PC-9 (cell line): ENCODE measurements at regions of chr1 and their contacts with region 1.

Region 1: DNA sequence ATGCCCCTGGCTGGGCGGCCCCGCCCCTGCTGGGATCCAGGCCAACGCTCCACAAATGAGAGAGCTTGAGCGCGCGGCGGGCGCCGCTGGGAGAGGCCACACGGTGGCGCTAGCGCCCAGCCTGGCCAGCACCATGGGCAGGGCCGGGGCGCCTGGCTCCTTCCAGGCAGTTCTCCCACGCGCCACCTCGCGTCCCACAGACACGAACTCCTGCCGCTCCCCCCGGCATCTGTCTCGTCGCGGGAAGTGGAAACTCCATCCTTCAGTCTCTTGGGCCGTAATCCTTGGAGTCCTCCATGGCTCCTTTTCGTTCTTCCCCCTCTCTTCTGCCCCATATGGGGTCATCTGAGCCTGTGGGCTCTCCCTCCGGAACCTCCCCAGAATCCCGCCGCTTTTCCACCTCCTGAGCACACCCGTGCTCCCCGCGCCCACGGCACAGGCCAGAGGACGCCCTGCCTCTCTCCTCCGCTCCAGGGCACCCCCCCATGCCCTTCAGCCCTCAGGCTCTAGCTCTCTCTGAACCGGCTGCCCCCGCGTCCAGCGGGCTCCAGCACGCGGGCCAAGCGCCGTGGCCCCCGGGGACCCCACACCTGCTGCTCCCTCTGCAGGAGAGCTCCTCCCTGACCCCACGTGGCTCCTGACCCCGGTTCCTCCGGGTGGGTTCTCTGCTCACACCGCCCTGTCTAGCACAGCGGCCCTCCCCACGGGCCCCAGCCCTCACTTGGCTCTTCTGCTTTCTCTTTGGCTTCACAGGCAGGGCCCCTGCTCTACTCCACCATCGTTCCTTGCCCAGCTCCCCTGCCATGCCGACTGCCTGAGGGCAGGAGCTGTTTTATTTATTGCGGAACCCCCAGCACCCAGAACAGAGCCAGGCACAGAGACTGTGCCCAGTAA is 31.9 kb upstream of the EDN2 start:
- DNase-seq: peak; percentile 62 to 96
- H3K4me3 ChIP-seq: peak overlapping the region; percentile 49; the same call in 1 of the 2 replicates
- H3K27ac ChIP-seq: peak overlapping the region; percentile 96
- H3K4me1 ChIP-seq: peaks cover 42% of the 10 kb centered on the region
- H3K27me3 ChIP-seq: no peaks in the 10 kb centered on the region
- CTCF ChIP-seq: peak; percentile 87

Region 2: GRCh38 chr1:41353726-41354125 is 162.7 kb before region 1 on chr1:
- CTCF ChIA-PET with region 1: no interaction called
- POLR2A ChIA-PET with region 1: no interaction called
- intact Hi-C with region 1: loop called (anchors 10 kb)
- DNase-seq: peak; percentile 98
- H3K4me3 ChIP-seq: no peak overlapping the region
- H3K27ac ChIP-seq: peak overlapping the region; percentile 47
- H3K4me1 ChIP-seq: peaks cover 59% of the 10 kb centered on the region
- H3K27me3 ChIP-seq: no peaks in the 10 kb centered on the region
- CTCF ChIP-seq: no peak

Region 3: DNA sequence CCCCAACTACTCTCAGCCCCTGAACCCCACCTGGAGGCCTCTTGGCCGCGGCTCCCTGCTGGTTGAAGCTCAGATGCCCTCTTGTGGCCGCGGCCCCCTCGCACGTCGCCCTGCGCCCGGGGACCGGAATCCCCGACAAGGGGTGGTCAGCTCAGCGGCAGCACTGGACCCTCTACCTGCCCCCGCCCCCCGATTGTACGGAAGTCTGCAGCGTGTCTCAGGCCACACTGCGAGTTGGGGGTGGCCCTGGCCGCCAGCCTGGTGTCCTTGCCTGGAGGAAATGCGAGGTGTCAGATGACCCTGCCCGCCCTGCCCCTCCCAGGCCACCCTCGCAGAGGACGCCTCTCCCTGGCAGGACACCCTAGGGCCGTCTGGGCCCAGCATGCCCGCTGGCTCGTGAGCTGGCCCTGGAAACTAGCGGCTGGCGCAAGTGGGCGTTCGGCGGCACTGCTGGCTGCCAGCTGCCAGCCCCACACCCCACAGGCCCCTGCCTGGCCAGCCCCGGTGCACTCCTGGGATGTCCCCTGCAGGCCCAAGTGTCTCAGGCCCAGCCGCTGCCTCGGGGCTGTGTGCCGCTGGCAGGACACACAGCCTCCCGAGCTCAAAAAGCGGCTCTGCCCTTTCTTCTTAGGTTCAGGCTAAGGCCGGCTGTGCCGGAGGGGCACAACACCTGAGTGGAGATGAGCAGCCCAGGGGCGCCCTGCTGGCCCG is 92.7 kb before region 1 on chr1:
- CTCF ChIA-PET with region 1: interaction called, 5 read pairs
- POLR2A ChIA-PET with region 1: interaction called, 10 read pairs
- intact Hi-C with region 1: loop called (anchors 1 kb)
- DNase-seq: peak; percentile 45 to 70
- H3K4me3 ChIP-seq: peak overlapping the region; percentile 43; the same call in 1 of the 2 replicates
- H3K27ac ChIP-seq: no peak overlapping the region
- H3K4me1 ChIP-seq: peaks cover 24% of the 10 kb centered on the region
- H3K27me3 ChIP-seq: no peaks in the 10 kb centered on the region
- CTCF ChIP-seq: peak; percentile 55; the same call in 1 of the 2 replicates

Region 4: GRCh38 chr1:41484372-41485241 is 31.8 kb before region 1 on chr1 and contains the start of gene EDN2:
- CTCF ChIA-PET with region 1: interaction called, 12 read pairs
- POLR2A ChIA-PET with region 1: interaction called, 10 read pairs
- intact Hi-C with region 1: loop called (anchors 5 kb)
- DNase-seq: peak in 1 of 2 experiments; percentile 88
- H3K4me3 ChIP-seq: no peak within 1 kb of the TSS
- H3K27ac ChIP-seq: no peak within 1 kb of the TSS
- H3K4me1 ChIP-seq: peaks cover 27% of the 10 kb centered on the region
- H3K27me3 ChIP-seq: no peaks in the 10 kb centered on the region
- CTCF ChIP-seq: peak; percentile 49
- total RNA-seq, gene EDN2: 0.43 and 0.48 TPM in 2 replicates

Region 5: GRCh38 chr1:41573785-41574713 is 57.6 kb after region 1 on chr1:
- CTCF ChIA-PET with region 1: no interaction called
- POLR2A ChIA-PET with region 1: no interaction called
- intact Hi-C with region 1: loop called (anchors 2 kb)
- DNase-seq: peak; percentile 58 to 80
- H3K4me3 ChIP-seq: no peak overlapping the region
- H3K27ac ChIP-seq: no peak overlapping the region
- H3K4me1 ChIP-seq: peaks cover 5% of the 10 kb centered on the region
- H3K27me3 ChIP-seq: no peaks in the 10 kb centered on the region
- CTCF ChIP-seq: peak; percentile 93